Stomach (tissue), 19 donors: ENCODE measurements at regions of chr15 and their contacts with region 1.

Region 1: DNA sequence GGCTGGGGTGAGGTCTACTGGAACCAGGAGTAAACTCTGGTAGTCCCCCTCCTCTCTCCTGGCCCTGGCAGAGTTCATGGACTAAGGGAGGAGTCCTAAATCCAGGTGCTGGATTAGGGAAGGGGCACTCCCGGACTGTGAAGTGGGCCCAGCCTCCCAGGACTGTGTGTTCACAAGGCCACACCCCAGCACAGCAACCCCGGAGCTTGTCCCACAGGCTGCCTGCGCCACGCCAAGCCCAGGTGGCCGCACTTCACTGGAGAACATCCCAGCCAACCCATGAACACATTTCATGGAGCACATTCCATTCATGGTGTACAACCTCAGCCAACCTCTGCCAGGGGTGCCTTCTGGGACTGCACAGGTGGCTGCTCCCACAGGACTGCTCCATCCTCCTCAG is 8.2 kb downstream of the ARPIN start:
- DNase-seq: no peak
- H3K4me3 ChIP-seq: no peak overlapping the region
- H3K27ac ChIP-seq: no peak overlapping the region
- H3K4me1 ChIP-seq: no peaks in the 10 kb centered on the region
- H3K27me3 ChIP-seq: no peaks in the 10 kb centered on the region
- CTCF ChIP-seq: no peak
- EP300 ChIP-seq: no peak
- POLR2A ChIP-seq: no peak

Region 2: GRCh38 chr15:89993349-89993748 is 88.8 kb after region 1 on chr15:
- intact Hi-C with region 1: loop called (anchors 5 kb)
- DNase-seq: no peak
- H3K4me3 ChIP-seq: no peak overlapping the region
- H3K27ac ChIP-seq: no peak overlapping the region
- H3K4me1 ChIP-seq: peaks cover 0 to 8% (median under 1%) of the 10 kb centered on the region in 4 donors
- H3K27me3 ChIP-seq: no peaks in the 10 kb centered on the region
- CTCF ChIP-seq: no peak
- EP300 ChIP-seq: no peak
- POLR2A ChIP-seq: no peak

Region 3: GRCh38 chr15:90071208-90071807 is 166.8 kb after region 1 on chr15:
- intact Hi-C with region 1: loop called (anchors 10 kb)
- DNase-seq: peak; percentile 84 to 93
- H3K4me3 ChIP-seq: no peak overlapping the region
- H3K27ac ChIP-seq: peak overlapping the region in 2 of 5 donors; percentile 39 to 44
- H3K4me1 ChIP-seq: peaks cover 11 to 39% (median 22%) of the 10 kb centered on the region in 4 donors
- H3K27me3 ChIP-seq: no peaks in the 10 kb centered on the region
- CTCF ChIP-seq: peak in 5 of 7 experiments; percentile 67 to 86 (median 78)
- EP300 ChIP-seq: no peak
- POLR2A ChIP-seq: no peak